Right ventricle myocardium superior (tissue), 1 donor: ENCODE measurements at regions of chr9 and their contacts with region 1.

Region 1: GRCh38 chr9:126945682-126946081 is 31.1 kb downstream of the RALGPS1 start:
- DNase-seq: no peak
- ATAC-seq: no peak

Region 2: GRCh38 chr9:127197861-127198430 is 252.3 kb after region 1 on chr9:
- intact Hi-C with region 1: loop called (anchors 2 kb)
- DNase-seq: no peak
- ATAC-seq: peak; percentile 26